ENCODE measurements at regions of chr2 and their contacts with region 1.

Region 1: DNA sequence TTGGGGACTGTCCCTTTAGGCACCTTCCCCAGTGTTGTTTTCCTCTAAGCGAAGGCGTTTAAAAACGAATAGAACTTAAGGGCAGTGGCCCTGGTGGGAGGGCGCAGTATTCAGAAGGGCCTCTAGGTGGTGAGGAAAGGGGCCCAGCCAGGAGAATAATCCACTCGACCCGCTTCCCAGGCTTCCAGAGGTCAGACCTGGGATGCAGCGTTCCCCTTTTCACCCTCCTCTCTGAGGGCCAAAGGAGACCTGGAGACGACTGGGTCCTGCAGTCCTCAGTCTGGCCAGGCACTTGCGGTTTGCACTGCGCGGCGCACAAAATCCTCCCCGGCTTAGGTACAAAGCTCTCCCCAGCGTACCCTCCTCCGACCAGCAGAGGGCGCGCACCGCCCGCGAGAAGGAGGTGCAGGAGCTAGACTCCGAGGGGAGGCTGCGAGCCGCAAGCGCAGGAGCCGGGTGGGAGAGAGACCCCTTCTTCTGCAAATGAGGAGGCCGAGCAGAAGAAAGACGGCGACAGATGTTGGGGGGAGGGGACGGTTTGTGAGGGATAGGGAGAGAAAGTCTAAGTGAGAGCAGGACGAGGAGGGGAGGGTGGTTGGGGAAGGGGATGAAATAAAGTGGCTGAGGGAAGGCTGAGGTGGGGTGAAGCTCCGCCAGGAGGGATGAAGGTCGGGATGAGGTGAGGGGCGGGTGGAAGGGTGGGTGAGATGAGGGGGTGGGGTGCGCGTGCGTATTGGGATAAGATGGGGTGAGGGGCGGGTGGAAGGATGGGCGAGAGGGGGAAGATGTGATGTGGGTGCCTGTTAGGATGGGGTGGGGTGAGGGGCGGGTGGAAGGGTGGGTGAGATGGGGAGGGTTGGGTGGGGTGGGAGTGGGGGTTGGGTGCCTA is 4.9 kb downstream of the FEV start:
- DNase-seq: peak; percentile 71 to 86 (median 73)
- H3K4me3 ChIP-seq: peak overlapping the region; percentile 32
- H3K4me3 Mint-ChIP-seq: peak overlapping the region; percentile 68 to 90 (median 78)
- H3K27ac ChIP-seq: no peak overlapping the region
- H3K27ac Mint-ChIP-seq: no peak overlapping the region
- H3K4me1 ChIP-seq: peaks cover 35% of the 10 kb centered on the region
- H3K4me1 Mint-ChIP-seq: peaks cover 16 to 43% (median 23%) of the 10 kb centered on the region in 3 donors
- H3K27me3 ChIP-seq: peaks cover 46% of the 10 kb centered on the region
- H3K27me3 Mint-ChIP-seq: peaks cover 48 to 77% of the 10 kb centered on the region in 2 donors

Region 2: DNA sequence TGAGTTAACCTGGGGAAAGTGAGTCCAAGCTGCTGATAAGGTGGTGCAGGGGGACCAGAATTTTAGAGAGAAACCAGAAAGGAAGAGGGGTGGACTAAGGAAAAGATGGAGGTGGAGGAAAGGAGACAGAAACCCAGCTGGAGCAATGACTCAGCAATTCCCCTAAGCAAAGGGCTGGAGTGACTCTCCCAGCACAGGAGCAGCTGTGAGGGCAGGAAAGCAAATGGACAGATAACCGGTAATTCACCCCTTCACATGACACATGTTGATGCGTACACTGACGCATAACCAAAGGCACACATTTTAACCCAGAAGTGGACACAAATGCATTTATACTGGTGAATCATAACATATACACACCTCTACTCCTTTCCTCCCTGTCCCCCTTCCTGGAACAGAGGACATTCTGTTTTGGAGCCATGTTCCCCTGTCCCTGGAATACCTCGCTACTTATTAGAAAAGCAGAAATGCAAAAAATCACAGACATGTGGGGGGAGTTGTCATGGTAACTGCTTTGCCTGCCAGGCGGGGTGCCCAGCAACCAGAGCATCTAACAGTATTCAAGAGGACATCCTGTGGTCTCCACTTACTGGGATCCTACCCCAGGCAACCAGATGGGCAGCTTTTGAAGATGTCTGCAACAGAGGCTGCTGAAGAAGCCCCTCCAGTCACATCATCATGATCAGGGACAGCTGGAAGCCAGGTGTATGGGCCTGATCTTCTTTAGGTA is 15.9 kb before region 1 on chr2:
- CTCF ChIA-PET with region 1: interaction called, 28 read pairs
- POLR2A ChIA-PET with region 1: no interaction called
- DNase-seq: no peak
- H3K4me3 ChIP-seq: no peak overlapping the region
- H3K4me3 Mint-ChIP-seq: peak overlapping the region in 1 of 7 donors; percentile 35
- H3K27ac ChIP-seq: no peak overlapping the region
- H3K27ac Mint-ChIP-seq: no peak overlapping the region
- H3K4me1 ChIP-seq: peaks cover 11% of the 10 kb centered on the region
- H3K4me1 Mint-ChIP-seq: peaks cover 8 to 30% (median 9%) of the 10 kb centered on the region in 3 donors
- H3K27me3 ChIP-seq: peaks cover 40% of the 10 kb centered on the region
- H3K27me3 Mint-ChIP-seq: peaks cover 58 to 69% of the 10 kb centered on the region in 2 donors

Region 3: GRCh38 chr2:218995972-218996711 is 16.1 kb after region 1 on chr2:
- CTCF ChIA-PET with region 1: interaction called, 28 read pairs
- POLR2A ChIA-PET with region 1: no interaction called
- DNase-seq: peak; percentile 60 to 79 (median 63)
- H3K4me3 ChIP-seq: no peak overlapping the region
- H3K4me3 Mint-ChIP-seq: peak overlapping the region in 3 of 7 donors; percentile 39 to 48 (median 44)
- H3K27ac ChIP-seq: no peak overlapping the region
- H3K27ac Mint-ChIP-seq: peak overlapping the region in 1 of 8 donors; percentile 39
- H3K4me1 ChIP-seq: peaks cover 12% of the 10 kb centered on the region
- H3K4me1 Mint-ChIP-seq: peaks cover 2 to 27% (median 7%) of the 10 kb centered on the region in 3 donors
- H3K27me3 ChIP-seq: peaks cover 50% of the 10 kb centered on the region
- H3K27me3 Mint-ChIP-seq: peaks cover 65 to 80% of the 10 kb centered on the region in 2 donors